Activated CD8-positive, alpha-beta memory T cell treated with anti-CD3 and anti-CD28 coated beads, Interleukin-2, amount 10 ng/mL, durations not matched to agents 7 days and 5 days (primary cell): ENCODE measurements at regions of chr12 and their contacts with region 1.

Region 1: DNA sequence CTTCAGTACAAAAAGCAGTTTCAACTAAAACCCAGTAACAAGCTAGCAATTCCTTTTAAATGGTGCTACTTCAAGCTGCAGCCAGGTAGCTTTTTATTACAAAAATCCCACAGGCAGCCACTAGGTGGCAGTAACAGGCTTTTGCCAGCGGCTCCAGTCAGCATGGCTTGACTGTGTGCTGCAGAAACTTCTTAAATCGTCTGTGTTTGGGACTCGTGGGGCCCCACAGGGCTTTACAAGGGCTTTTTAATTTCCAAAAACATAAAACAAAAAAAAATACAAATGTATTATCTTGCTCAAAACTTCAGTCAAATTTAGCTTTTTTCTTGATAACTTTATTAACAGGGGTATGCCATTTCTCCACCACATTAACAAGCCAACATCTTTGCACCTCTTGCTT is 3.6 kb upstream of the CLEC4E start:
- DNase-seq: peak; percentile 74
- ATAC-seq: peak; percentile 71
- H3K4me3 Mint-ChIP-seq: no peak overlapping the region
- H3K27ac Mint-ChIP-seq: no peak overlapping the region
- H3K4me1 Mint-ChIP-seq: peaks cover 4% of the 10 kb centered on the region
- H3K27me3 Mint-ChIP-seq: peaks cover 57% of the 10 kb centered on the region

Region 2: GRCh38 chr12:8554451-8555195 is 10.3 kb after region 1 on chr12:
- CTCF ChIA-PET with region 1: interaction called, 24 read pairs
- DNase-seq: no peak
- ATAC-seq: no peak
- H3K4me3 Mint-ChIP-seq: no peak overlapping the region
- H3K27ac Mint-ChIP-seq: no peak overlapping the region
- H3K4me1 Mint-ChIP-seq: peaks cover 6% of the 10 kb centered on the region
- H3K27me3 Mint-ChIP-seq: peaks cover 7% of the 10 kb centered on the region

Region 3: GRCh38 chr12:8609061-8609570 is 64.8 kb after region 1 on chr12:
- CTCF ChIA-PET with region 1: interaction called, 38 read pairs
- DNase-seq: peak; percentile 41
- ATAC-seq: no peak
- H3K4me3 Mint-ChIP-seq: no peak overlapping the region
- H3K27ac Mint-ChIP-seq: no peak overlapping the region
- H3K4me1 Mint-ChIP-seq: peaks cover 7% of the 10 kb centered on the region
- H3K27me3 Mint-ChIP-seq: peaks cover 19% of the 10 kb centered on the region

Region 4: GRCh38 chr12:8890313-8891085 is 346.2 kb after region 1 on chr12:
- CTCF ChIA-PET with region 1: interaction called, 20 read pairs
- DNase-seq: peak; percentile 67
- ATAC-seq: peak; percentile 55
- H3K4me3 Mint-ChIP-seq: peak overlapping the region; percentile 73
- H3K27ac Mint-ChIP-seq: no peak overlapping the region
- H3K4me1 Mint-ChIP-seq: peaks cover 5% of the 10 kb centered on the region
- H3K27me3 Mint-ChIP-seq: peaks cover 19% of the 10 kb centered on the region